H1 (cell line): ENCODE measurements at regions of chr10 and their contacts with region 1.

Region 1: DNA sequence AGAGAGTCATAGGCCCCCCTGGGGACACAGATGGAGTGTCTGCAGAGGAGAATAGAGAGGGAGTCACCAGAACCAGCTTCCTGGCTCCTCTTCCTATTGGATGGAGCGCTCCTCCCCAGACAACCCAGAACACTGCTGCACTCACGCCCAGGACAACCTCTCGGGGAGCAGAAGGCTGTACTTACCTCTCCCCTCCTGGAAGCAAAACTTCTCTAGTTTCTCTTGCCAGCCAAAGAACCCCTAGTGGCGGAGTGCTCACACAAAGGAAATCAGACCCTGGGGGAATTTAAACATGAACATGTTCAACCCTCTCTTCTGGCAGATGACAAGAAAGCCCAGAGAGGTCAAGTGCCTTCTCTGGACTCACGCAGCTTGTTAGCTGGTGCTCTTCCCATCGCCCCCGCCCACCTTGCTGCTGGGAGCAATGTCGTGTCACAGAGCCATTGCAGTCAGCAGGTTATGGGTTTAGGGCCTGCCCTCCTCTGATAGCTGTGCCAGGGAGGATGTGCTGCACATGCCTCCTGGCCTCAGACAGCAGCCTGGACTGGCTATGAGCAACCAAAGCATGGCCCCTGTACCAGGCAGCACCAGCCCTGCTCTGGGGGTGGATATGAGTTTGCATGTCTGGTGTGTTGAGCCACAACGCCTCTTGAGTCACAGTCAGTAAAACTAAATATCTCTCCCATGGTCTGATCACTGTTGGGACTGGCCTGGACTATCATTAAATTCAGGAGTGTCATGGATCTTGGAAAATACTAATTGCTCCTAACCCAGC is 84.4 kb downstream of the SLIT1 start:
- DNase-seq: no peak
- H3K4me3 ChIP-seq: no peak overlapping the region
- H3K27ac ChIP-seq: no peak overlapping the region
- H3K4me1 ChIP-seq: peaks cover 0 to 17% (median 11%) of the 10 kb centered on the region in 4 experiments; a peak in 6 of 7 replicates
- H3K27me3 ChIP-seq: no peaks in the 10 kb centered on the region; a peak in 1 of 7 replicates
- CTCF ChIP-seq: peak in 1 of 3 experiments; percentile 37; a peak in 1 of 4 replicates
- EP300 ChIP-seq: no peak
- POLR2A ChIP-seq: no peak
- RAD21 ChIP-seq: no peak

Region 2: DNA sequence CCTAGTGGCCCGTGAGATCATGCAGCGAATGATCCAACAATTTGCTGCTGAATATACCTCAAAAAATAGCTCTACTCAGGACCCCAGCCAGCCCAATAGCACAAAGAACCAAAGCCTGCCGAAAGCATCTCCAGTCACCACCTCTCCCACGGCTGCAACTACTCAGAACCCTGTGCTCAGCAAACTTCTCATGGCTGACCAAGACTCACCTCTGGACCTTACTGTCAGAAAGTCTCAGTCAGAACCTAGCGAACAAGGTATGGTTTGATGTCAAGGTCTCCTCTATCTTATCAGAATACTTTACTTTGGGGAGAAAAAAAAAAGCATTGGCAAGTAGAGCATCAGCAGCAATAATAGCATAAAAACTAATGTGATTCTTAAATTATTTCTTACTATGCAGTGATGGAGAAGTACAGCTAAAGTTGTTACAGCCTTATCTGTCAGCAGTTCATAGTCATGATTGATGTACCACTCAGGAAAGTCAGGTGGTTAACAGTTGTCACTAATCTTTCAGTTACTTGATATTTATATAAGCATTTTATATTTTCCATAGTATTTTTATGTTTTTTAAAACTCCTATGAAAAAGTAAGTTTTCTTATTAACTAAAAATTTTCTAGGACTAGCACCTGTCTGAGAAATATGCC is 152.2 kb before region 1 on chr10:
- CTCF ChIA-PET with region 1: no interaction called
- POLR2A ChIA-PET with region 1: no interaction called
- DNase-seq: no peak
- H3K4me3 ChIP-seq: no peak overlapping the region
- H3K27ac ChIP-seq: no peak overlapping the region
- H3K4me1 ChIP-seq: no peaks in the 10 kb centered on the region
- H3K27me3 ChIP-seq: no peaks in the 10 kb centered on the region
- CTCF ChIP-seq: no peak
- EP300 ChIP-seq: no peak
- POLR2A ChIP-seq: no peak
- RAD21 ChIP-seq: no peak; a peak in 1 of 4 replicates

Region 3: GRCh38 chr10:97117372-97117771 is 16.0 kb after region 1 on chr10:
- CTCF ChIA-PET with region 1: interaction called, 11 read pairs
- POLR2A ChIA-PET with region 1: no interaction called
- DNase-seq: no peak
- H3K4me3 ChIP-seq: no peak overlapping the region
- H3K27ac ChIP-seq: no peak overlapping the region
- H3K4me1 ChIP-seq: peaks cover 0 to 4% (median 0%) of the 10 kb centered on the region in 4 experiments; a peak in 2 of 7 replicates
- H3K27me3 ChIP-seq: no peaks in the 10 kb centered on the region
- CTCF ChIP-seq: peak in 2 of 3 experiments; percentile 44 to 59; a peak in 3 of 4 replicates
- EP300 ChIP-seq: no peak
- POLR2A ChIP-seq: no peak
- RAD21 ChIP-seq: peak; percentile 72 to 73

Region 4: DNA sequence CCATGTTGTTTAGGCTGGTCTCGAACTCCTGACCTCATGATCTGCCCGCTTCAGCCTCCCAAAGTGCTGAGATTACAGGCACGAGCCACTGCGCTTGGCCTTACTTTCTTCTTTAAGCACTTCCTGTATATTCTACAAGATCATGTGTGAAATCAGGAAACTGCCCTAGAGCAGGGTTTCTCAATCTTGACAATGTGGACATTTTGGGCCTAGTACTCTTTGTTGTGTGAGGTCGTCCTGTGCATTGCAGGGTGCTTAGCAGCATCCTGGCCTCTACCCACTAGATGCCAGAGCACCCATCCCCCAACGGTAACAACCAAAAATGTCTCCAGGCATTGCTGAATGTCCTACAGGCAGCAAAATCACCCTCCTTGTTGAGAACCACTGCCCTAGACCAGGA is 275.1 kb after region 1 on chr10:
- CTCF ChIA-PET with region 1: no interaction called
- POLR2A ChIA-PET with region 1: no interaction called
- DNase-seq: no peak
- H3K4me3 ChIP-seq: no peak overlapping the region
- H3K27ac ChIP-seq: no peak overlapping the region
- H3K4me1 ChIP-seq: no peaks in the 10 kb centered on the region
- H3K27me3 ChIP-seq: no peaks in the 10 kb centered on the region
- CTCF ChIP-seq: no peak
- EP300 ChIP-seq: no peak
- POLR2A ChIP-seq: no peak
- RAD21 ChIP-seq: no peak

Region 5: DNA sequence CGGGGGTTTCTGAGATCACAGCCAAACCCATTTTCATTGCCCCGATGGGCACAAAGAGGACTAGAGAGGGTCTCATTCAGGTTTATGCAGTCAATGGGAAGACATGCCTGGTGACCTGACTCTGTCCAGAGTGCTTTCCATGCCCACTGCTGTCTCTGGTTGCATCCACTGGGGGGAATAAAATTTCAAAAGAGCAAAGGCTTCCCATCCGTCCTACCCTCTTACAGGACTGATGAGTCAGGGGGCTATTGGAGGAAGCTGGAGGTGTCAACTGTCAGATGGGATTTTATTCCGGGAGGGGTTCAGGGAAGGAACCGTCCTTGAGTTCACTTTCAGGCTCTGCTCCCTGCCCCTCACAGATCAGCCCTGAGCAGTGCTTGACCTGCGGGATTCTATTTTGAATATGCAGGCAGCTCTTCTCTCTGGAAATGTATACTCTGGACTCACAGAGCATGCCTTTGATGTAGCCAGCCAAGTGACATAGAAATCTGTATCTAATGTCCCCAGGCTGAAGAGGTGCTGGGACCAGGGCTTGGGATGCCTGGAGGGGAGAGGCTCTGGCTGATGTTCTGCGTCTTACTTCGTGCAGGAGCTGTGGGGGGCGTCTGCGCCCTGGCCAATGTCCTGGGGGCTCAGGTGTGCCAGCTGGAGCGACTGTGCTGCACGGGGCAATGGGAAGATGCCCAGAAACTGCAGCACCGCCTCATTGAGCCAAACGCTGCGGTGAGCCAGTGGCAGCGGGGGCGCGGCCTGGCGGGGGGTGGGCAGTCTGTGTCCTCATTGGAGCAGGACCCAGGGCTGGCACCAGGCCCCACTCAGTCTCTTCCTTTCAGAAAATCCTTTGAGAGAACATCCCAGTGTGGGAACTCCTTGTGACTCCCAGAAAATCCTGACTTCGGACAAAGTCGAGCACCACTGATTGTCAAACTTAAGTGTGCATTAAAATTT is 500.2 kb after region 1 on chr10:
- CTCF ChIA-PET with region 1: no interaction called
- POLR2A ChIA-PET with region 1: no interaction called
- DNase-seq: no peak
- H3K4me3 ChIP-seq: no peak overlapping the region
- H3K27ac ChIP-seq: no peak overlapping the region
- H3K4me1 ChIP-seq: peaks cover 0 to 2% (median under 1%) of the 10 kb centered on the region in 4 experiments; a peak in 1 of 7 replicates
- H3K27me3 ChIP-seq: no peaks in the 10 kb centered on the region
- CTCF ChIP-seq: no peak
- EP300 ChIP-seq: no peak
- POLR2A ChIP-seq: no peak
- RAD21 ChIP-seq: no peak